Mammary epithelial cell (primary cell): ENCODE measurements at regions of chr7 and their contacts with region 1.

Region 1: DNA sequence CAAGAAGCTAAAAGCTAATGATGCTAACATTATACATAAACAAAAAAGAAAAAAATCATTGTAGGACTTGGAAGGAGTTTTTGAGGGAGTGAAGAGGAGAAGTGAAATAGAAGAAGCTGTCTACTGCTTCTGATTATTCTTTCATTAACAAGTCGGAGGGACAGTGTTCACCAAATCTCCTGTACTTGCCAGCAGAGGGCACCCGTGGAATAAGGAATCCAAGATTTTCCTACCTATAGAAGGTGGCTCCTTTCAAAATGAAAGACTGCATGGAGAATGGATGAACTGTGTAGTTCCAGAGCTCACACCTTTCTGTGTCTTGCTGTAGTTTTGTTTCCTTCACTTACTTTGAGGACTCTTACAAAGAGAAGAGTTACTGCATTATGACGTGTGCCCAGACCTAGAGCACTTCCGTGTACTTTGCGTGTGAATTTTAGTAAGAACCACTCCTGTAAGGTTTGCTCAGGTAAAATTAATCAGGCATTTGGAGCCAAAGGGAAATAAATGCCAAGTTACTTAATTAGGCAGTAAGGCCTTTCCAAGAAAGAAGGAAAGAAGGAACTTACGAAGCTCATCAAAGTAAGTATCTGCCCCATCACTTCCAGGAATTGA is 145.1 kb downstream of the SEMA3D start:
- DNase-seq: peak; percentile 58
- H3K4me3 ChIP-seq: no peak overlapping the region
- H3K27ac ChIP-seq: no peak overlapping the region
- H3K4me1 ChIP-seq: no peaks in the 10 kb centered on the region
- H3K27me3 ChIP-seq: no peaks in the 10 kb centered on the region
- CTCF ChIP-seq: peak; percentile 72 to 85

Region 2: DNA sequence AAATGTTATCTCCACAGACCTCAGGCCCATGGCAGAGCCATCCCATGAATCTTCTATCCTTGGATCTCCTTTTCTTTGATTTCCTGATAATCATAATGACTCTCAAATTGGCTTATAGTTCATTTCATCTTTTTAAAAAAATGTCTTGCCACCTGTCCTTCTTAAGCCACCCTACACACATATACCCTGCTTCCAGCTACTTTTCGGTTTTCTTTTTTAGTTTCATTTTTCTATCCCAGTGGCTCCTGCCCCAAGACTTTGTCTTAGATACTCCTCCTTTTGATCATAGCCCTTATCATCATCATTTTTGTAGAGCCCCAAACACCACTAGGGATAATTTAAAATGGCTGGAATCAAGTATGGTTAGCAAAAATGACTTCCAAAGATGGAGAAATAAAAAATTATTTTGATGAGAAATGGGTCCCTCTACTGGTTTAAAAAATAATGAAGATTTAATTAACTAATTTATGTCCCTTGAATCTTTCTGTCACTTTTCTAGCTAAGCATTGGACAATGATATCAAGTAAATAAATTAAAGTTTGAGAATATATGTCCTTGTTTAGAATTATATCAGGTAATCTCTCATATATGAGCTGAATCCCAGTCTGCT is 422.4 kb after region 1 on chr7:
- CTCF ChIA-PET with region 1: no interaction called
- dilution Hi-C with region 1: no loop called
- in situ Hi-C with region 1: loop called (anchors 25 kb)
- intact Hi-C with region 1: loop called (anchors 5 kb)
- DNase-seq: no peak
- H3K4me3 ChIP-seq: no peak overlapping the region
- H3K27ac ChIP-seq: no peak overlapping the region
- H3K4me1 ChIP-seq: no peaks in the 10 kb centered on the region
- H3K27me3 ChIP-seq: no peaks in the 10 kb centered on the region
- CTCF ChIP-seq: peak; percentile 19 to 21

Region 3: GRCh38 chr7:85471740-85472139 is 430.0 kb after region 1 on chr7:
- CTCF ChIA-PET with region 1: no interaction called
- dilution Hi-C with region 1: no loop called
- in situ Hi-C with region 1: loop called (anchors 25 kb)
- intact Hi-C with region 1: no loop called
- DNase-seq: peak; percentile 17
- H3K4me3 ChIP-seq: no peak overlapping the region
- H3K27ac ChIP-seq: no peak overlapping the region
- H3K4me1 ChIP-seq: no peaks in the 10 kb centered on the region
- H3K27me3 ChIP-seq: no peaks in the 10 kb centered on the region
- CTCF ChIP-seq: no peak

Region 4: GRCh38 chr7:85529197-85529596 is 487.5 kb after region 1 on chr7:
- CTCF ChIA-PET with region 1: no interaction called
- dilution Hi-C with region 1: no loop called
- in situ Hi-C with region 1: loop called in 1 of 2 experiments (anchors 25 kb)
- intact Hi-C with region 1: no loop called
- DNase-seq: peak; percentile 6
- H3K4me3 ChIP-seq: no peak overlapping the region
- H3K27ac ChIP-seq: no peak overlapping the region
- H3K4me1 ChIP-seq: no peaks in the 10 kb centered on the region
- H3K27me3 ChIP-seq: no peaks in the 10 kb centered on the region
- CTCF ChIP-seq: no peak

Region 5: DNA sequence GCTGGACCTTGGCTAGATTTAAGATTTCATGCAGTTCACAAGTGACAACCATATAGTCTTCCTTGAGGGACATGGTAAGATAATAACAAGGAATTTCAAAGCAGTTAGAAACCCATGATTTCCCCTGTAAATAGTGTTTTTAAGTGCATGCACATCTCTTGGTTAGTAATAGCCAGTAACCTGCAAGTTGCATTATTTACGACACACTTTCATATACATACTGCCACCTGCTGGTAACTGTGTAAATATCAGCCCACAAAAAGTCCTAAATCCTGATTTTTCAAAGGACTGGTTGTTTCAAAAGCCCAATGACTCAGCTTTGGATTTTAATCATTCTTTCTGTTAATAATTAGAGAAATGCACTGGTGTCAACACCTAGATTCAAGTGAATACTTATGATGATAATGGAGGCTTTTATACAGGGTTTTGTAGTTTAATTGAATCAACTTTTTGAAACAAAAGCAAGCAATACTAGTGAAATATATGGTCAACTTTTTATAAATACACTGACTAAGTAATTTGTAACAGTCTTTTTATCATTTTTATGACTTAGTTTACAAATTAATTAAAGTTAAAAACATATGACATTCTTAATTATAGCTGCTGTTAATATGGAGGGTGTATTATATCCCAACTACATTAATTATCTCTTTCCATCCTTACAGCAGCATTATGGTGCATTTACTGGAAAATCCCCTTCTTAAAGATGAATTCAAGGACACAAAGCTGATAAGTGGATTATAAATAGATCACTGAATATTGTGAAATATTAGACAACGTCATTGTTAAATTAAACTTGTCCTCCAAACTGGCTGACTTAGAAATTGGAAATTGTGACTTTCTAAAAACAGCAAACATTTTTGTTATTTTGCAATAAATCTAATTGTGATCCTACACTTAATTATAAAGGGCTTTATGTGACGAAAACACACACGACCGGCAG is 512.8 kb after region 1 on chr7:
- CTCF ChIA-PET with region 1: no interaction called
- dilution Hi-C with region 1: no loop called
- in situ Hi-C with region 1: loop called (anchors 25 kb)
- intact Hi-C with region 1: no loop called
- DNase-seq: peak; percentile 55
- H3K4me3 ChIP-seq: no peak overlapping the region
- H3K27ac ChIP-seq: no peak overlapping the region
- H3K4me1 ChIP-seq: no peaks in the 10 kb centered on the region
- H3K27me3 ChIP-seq: peaks cover 1% of the 10 kb centered on the region
- CTCF ChIP-seq: peak; percentile 55 to 71

Region 6: GRCh38 chr7:85750454-85750949 is 708.8 kb after region 1 on chr7:
- CTCF ChIA-PET with region 1: no interaction called
- dilution Hi-C with region 1: no loop called
- in situ Hi-C with region 1: loop called in 1 of 2 experiments (anchors 10 kb)
- intact Hi-C with region 1: loop called (anchors 5 kb)
- DNase-seq: peak; percentile 21
- H3K4me3 ChIP-seq: no peak overlapping the region
- H3K27ac ChIP-seq: no peak overlapping the region
- H3K4me1 ChIP-seq: no peaks in the 10 kb centered on the region
- H3K27me3 ChIP-seq: peaks cover 2% of the 10 kb centered on the region
- CTCF ChIP-seq: peak; percentile 60 to 88

Region 7: DNA sequence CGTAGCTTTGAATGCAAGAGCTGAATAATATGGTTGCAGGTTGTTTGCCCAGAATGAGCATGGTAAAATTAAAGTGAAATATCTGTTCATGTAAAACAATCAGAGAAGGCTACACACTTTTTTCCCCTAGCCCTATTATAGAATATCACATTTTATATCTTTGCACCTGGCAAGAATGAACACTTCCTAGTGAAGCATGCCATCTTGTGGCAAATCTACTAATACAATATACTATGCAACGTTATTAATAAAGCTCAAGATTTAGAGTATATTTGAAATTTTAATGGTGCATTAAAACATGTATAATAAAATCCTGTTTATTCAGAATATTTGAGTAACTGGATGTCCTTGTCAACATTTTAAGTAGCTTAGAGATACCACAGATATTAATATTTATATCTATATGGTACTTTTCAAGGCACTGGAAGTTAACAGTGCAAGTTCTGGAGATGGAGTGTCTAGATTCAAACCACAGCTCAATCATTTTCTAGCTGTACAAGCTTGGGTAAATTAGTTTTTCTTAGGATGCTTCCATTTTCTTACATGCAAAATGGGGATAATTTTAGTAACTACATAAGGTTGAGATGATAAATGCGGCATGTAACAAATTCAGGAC is 788.2 kb after region 1 on chr7:
- CTCF ChIA-PET with region 1: no interaction called
- dilution Hi-C with region 1: no loop called
- in situ Hi-C with region 1: loop called (anchors 25 kb)
- intact Hi-C with region 1: loop called (anchors 5 kb)
- DNase-seq: no peak
- H3K4me3 ChIP-seq: no peak overlapping the region
- H3K27ac ChIP-seq: no peak overlapping the region
- H3K4me1 ChIP-seq: no peaks in the 10 kb centered on the region
- H3K27me3 ChIP-seq: no peaks in the 10 kb centered on the region
- CTCF ChIP-seq: peak; percentile 14 to 42